ENCODE measurements at regions of chr16 and their contacts with region 1.

Region 1: DNA sequence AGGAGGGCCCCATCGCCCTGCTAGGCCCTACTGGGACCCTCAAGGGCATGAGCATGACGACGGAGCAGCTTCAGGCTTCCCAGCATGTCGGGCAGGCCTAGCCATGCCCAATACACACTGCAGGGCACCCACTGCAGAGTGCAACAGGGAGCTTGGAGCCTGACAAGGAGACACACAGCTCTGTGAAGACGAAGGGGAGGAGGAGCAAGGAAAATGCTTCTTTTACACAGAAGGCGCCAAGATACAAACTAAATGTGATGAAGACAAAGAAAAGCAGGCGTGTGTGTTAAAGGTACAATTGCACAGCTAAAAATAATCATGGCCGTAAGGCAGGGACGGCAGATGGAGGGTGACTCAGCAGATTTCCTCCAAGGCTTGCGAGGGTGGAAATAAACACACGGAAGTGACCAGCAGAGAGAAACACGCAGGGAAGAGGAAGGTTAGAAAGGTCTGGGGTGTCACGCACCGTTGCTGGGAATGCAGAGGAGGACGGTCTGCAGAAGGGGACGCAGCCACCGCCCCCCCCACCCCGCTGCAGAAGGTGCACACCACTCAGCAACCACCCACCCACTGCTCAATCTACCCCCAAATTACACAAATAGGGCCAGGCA is 108.5 kb downstream of the ZNF778 start:
- DNase-seq: peak; percentile 89

Region 2: DNA sequence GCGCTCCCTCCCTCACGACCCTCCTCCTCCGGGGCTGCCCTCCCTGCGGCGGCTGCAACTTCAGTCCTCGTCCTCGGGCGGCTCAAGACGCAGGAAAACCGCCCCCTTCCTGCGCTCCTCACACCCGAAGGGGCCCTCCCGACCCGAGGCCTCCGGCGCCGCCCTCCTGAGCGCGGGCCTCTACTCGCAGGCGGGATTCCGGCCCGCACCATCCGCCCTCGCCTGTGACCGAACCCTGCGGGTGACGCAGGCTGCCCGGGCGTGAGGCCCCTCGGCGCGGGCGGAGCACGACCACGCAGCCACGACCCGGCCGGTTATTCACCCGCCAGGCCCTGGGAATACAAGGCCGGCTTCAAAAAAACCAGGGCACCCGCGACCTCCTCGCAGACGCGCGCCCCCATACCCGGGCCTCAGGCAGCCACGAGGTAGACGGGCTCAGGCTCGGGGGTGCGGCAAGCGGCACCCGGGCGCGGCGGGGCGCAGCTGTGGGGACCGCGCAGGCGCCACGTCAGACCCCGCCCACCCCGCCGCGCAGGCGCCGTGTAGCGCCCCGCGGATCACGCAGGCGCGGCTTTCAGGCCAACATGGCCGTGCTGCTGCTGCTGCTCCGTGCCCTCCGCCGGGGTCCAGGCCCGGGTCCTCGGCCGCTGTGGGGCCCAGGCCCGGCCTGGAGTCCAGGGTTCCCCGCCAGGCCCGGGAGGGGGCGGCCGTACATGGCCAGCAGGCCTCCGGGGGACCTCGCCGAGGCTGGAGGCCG is 182.0 kb after region 1 on chr16 and contains the start of gene SPG7:
- intact Hi-C with region 1: loop called (anchors 2 kb)
- DNase-seq: peak; percentile 94
- total RNA-seq, gene SPG7: 89.5 TPM